Activated T-helper 1 cell treated with anti-CD3 and anti-CD28 coated beads, Interleukin-12 subunit alpha, Interleukin-12 subunit beta, Interleukin-2, Interleukin-4 antibody, amounts not matched to agents 30 ng/mL and 10 ng/mL and 1 ng/mL, durations not matched to agents 14 hours and 24 hours and 36 hours (primary cell): ENCODE measurements at regions of chr7 and their contacts with region 1.

Region 1: GRCh38 chr7:105652359-105652993 is 71.2 kb upstream of the EFCAB10 start:
- DNase-seq: peak; percentile 41
- H3K4me3 Mint-ChIP-seq: no peak overlapping the region
- H3K27ac Mint-ChIP-seq: no peak overlapping the region
- H3K4me1 Mint-ChIP-seq: peaks cover 16% of the 10 kb centered on the region
- H3K27me3 Mint-ChIP-seq: no peaks in the 10 kb centered on the region

Region 2: DNA sequence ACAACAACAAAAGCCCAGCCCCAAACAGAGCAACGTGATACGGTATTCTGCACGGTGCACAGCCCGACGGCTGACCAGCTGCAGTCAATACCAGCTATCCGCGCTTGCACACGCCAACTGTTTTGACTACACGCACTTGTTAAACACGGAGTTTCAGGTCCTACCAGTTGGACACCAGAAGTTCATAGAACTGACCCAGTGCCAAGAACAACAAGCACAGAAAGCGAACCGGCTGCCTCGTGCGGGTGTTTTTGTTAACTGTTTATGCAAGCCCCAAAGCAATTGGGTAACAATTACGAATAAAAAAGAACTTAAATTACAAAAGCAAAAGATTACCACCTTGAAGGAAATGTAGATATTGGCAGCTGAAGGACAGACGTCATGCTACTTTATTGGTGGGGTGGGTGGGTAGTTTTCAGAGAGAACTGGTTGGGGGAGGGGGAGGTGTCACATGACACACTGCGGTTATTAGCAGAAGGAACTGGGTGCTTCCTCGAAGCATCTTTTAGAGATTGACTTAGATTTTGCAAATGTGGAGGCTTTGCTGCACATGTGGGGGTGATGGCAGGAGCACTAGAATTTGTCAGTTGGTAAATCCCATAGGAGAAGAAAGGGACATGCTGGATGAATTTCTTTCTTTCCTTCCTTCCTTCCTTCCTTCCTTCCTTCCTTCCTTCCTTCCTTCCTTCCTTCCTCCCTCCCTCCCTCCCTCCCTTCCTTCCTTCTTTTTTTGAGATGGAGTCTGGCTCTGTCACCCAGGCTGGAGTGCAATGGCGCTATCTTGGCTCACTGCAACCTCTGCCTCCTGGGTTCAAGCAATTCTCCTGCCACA is 39.5 kb after region 1 on chr7:
- intact Hi-C with region 1: loop called (anchors 1 kb)
- DNase-seq: no peak
- H3K4me3 Mint-ChIP-seq: peak overlapping the region; percentile 89
- H3K27ac Mint-ChIP-seq: peak overlapping the region; percentile 89
- H3K4me1 Mint-ChIP-seq: peaks cover 35% of the 10 kb centered on the region
- H3K27me3 Mint-ChIP-seq: no peaks in the 10 kb centered on the region

Region 3: DNA sequence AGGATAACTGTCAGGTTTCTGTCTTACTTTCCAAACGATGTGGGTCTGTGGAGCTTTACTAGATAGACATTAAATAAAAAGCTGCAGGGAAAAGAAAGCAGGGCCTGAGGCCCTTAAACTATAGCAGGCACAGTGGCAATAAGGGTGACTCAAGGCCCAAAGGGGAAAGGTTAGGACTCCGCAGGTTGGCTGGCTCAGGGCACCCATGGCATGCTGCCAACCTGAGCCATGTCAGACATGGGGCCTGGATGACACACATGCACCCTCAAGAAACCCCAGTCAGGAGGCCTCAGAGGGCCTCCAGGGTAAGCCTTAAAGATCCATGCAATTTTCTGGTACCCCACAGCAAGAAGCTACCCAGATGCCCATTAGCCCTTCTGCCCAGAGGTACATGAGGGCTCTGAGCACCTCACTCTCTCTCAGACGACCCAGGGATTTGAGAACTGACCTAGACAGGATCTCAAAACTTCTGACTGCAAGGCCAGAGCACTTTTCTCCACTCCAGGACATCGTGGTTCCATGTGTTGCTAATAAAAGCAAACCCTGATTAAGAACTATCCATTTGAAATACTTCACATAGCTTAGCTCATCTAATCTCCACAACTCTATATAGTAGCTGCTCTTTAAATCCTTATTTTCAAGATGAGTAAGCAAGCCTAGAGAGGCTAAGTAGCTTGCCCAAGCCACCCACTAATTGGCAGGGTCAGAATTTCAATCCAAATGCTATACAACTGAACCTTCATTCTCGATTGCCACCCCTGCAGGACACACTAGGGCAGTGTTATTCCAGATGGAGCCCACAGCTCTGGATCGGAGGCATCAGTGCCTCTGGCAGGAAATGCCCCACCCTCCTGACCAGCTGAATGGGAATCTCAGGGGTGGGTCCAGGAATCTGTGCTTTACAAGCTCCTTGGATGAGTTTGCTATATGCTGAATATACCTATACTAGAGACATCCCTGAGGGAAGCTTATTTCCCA is 61.3 kb after region 1 on chr7:
- intact Hi-C with region 1: no loop called
- DNase-seq: no peak
- H3K4me3 Mint-ChIP-seq: no peak overlapping the region
- H3K27ac Mint-ChIP-seq: no peak overlapping the region
- H3K4me1 Mint-ChIP-seq: no peaks in the 10 kb centered on the region
- H3K27me3 Mint-ChIP-seq: no peaks in the 10 kb centered on the region

Region 4: DNA sequence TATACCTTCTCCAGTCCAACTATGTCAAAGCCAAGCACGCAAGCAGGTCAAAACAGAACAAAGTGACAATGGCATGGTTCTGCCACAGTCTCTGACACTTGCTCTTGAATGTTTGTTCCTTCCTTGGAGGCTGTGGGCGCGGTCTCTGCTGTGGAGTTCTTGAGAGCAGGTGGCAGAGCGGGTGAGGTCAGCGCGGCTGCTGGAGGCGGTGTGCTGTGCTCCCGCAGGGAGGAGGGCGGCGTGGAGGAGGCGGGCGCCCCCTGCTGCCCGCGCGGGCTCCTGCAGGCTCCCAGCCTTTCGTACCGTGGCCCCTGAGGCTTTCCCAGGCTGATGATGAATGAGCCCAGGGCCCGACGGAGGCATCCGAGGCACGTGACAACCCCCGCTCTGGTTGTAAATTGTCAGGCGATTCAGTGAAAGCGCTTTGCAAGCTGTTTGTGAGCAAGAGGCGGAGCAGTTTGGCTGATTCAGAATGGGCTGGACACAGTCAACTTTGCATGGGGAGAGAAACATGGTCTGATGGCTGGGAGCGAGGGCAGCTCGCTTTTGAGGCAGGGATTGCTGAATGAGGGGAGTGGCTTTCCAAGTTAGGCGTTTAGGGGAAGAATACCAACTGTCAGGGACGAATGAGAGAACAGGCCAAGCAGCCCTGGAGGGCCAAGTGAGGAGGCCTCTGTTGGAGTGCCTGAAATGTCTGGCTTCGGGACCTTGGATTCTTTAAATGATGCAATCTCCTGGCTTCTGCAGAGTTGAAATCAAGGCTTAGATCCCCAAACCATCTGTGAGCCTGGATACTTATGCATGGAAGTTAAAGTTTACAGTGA is 357.1 kb after region 1 on chr7:
- intact Hi-C with region 1: loop called (anchors 1 kb)
- DNase-seq: peak; percentile 72
- H3K4me3 Mint-ChIP-seq: no peak overlapping the region
- H3K27ac Mint-ChIP-seq: peak overlapping the region; percentile 32
- H3K4me1 Mint-ChIP-seq: peaks cover 15% of the 10 kb centered on the region
- H3K27me3 Mint-ChIP-seq: peaks cover 33% of the 10 kb centered on the region

Region 5: DNA sequence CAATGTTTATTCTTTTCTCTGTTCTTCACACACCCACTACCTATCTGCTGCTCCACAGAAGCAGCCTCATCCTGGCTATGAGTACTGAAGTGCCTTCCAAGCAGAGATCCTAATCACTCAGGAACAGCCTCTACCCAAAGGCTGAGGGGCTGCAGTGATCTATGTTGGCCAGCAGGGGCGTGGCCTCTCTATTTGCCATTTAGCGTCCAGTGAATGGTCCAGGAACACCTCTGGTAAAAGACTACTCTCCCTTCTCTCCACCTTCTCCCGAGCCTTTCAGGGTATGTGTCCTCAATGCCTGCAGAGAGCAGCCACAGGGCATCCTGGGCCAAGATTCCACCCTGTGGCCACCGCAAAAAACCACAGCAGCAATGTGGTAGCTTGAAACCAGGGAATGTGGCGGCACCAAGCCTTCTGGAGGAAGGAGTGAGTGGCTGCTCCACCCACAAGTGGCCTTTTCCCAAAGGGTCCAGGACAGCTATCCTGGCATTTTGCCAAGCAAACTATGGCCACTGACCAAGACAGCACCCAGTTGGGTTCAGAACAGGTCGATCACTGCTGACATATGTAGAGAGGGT is 388.8 kb after region 1 on chr7:
- intact Hi-C with region 1: loop called (anchors 1 kb)
- DNase-seq: no peak
- H3K4me3 Mint-ChIP-seq: no peak overlapping the region
- H3K27ac Mint-ChIP-seq: no peak overlapping the region
- H3K4me1 Mint-ChIP-seq: peaks cover 15% of the 10 kb centered on the region
- H3K27me3 Mint-ChIP-seq: peaks cover 20% of the 10 kb centered on the region

Region 6: DNA sequence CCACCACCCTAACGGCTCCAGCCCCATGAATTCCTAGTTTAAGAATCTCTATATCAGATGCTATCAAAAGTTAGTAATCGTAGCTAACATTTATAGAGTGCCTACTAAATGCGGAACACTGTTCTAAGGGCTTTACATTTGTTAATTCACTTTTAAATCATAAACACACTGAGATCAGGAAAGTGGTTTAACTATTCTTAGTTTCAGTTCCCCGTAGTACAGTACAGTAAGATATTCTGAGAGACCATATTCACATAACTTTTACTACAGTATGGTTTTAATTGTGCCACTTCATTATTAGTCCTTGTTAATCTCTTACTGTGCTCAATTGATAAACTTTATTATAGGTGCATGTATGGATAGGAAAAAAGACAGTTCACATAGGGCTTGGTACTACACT is 437.2 kb after region 1 on chr7:
- intact Hi-C with region 1: no loop called
- DNase-seq: no peak
- H3K4me3 Mint-ChIP-seq: no peak overlapping the region
- H3K27ac Mint-ChIP-seq: no peak overlapping the region
- H3K4me1 Mint-ChIP-seq: no peaks in the 10 kb centered on the region
- H3K27me3 Mint-ChIP-seq: no peaks in the 10 kb centered on the region